H1 (cell line): ENCODE measurements at regions of chr10 and their contacts with region 1.

Region 1: DNA sequence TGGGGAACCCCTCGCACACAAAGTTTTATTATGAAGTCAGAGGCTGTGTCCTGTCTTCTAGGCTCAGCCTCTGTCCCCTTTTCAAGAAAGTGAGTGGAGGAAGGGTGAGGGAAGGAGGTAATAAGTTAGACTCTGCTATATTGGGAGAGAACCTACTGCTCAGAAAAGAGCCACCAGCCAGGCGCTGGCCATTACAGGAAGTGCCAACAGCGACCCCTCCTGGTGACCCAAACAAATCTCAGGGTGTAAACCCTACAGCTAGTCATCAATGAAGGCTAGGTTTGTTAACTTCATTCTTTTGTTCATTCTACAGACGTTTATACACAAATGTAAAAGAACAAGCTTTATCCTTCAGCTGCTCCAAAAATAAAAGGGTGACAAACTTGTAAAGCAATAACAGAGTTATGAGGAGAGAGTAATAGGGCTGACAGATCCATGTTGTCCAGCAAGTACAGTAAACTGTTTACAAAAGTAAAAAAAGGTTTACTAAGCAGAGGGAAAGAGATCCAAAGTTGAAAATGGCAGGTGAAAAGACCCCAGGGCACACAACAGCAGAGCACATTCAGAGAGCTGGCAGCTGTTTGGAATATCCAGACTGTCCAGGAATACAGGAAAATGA is 82.7 kb downstream of the FAM204A start:
- DNase-seq: peak in 1 of 2 experiments; percentile 85
- H3K4me3 ChIP-seq: no peak overlapping the region
- H3K27ac ChIP-seq: no peak overlapping the region
- H3K4me1 ChIP-seq: peaks cover 0 to 5% (median 1%) of the 10 kb centered on the region in 4 experiments; a peak in 4 of 7 replicates
- H3K27me3 ChIP-seq: peaks cover 6 to 30% (median 13%) of the 10 kb centered on the region in 4 experiments
- CTCF ChIP-seq: peak; percentile 60 to 85 (median 77)
- EP300 ChIP-seq: no peak
- POLR2A ChIP-seq: no peak
- RAD21 ChIP-seq: peak; percentile 80 to 85

Region 2: DNA sequence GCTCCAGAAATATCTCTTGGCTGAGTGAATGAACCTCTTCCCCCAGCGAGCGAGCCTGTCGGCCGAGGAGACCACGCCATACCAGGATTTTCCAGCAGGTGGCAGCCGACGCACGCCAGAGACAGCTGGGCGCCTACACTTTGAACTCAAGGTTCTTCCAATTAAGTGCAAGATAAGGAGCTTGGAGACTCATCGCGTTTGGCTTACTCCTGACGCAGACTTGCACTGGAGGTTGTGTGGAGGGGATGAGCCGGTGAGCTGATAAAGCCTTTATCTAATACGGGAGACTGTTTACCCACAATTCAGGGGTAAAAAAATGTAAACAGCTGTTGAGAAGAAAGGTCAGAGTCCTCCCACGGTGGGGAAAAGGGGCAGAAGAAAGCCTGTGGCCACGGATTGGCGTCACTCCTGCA is 762.8 kb before region 1 on chr10:
- CTCF ChIA-PET with region 1: interaction called, 14 read pairs
- POLR2A ChIA-PET with region 1: no interaction called
- DNase-seq: peak; percentile 63 to 93
- H3K4me3 ChIP-seq: no peak overlapping the region
- H3K27ac ChIP-seq: no peak overlapping the region
- H3K4me1 ChIP-seq: peaks cover 0 to 3% (median 1%) of the 10 kb centered on the region in 4 experiments; a peak in 2 of 7 replicates
- H3K27me3 ChIP-seq: peaks cover 0 to 6% (median under 1%) of the 10 kb centered on the region in 4 experiments; a peak in 2 of 7 replicates
- CTCF ChIP-seq: peak; percentile 90 to 95 (median 92)
- EP300 ChIP-seq: peak in 1 of 2 experiments; percentile 41; a peak in 1 of 3 replicates
- POLR2A ChIP-seq: no peak
- RAD21 ChIP-seq: peak; percentile 99

Region 3: GRCh38 chr10:117741524-117741923 is 517.9 kb before region 1 on chr10:
- CTCF ChIA-PET with region 1: interaction called, 11 read pairs
- POLR2A ChIA-PET with region 1: no interaction called
- DNase-seq: no peak
- H3K4me3 ChIP-seq: no peak overlapping the region
- H3K27ac ChIP-seq: no peak overlapping the region
- H3K4me1 ChIP-seq: no peaks in the 10 kb centered on the region; a peak in 1 of 7 replicates
- H3K27me3 ChIP-seq: peaks cover 0 to 7% (median 3%) of the 10 kb centered on the region in 4 experiments; a peak in 5 of 7 replicates
- CTCF ChIP-seq: peak; percentile 9 to 43 (median 39); a peak in 3 of 4 replicates
- EP300 ChIP-seq: no peak
- POLR2A ChIP-seq: no peak
- RAD21 ChIP-seq: peak; percentile 5 to 19; a peak in 1 of 4 replicates

Region 4: GRCh38 chr10:118035354-118036005 is 223.9 kb before region 1 on chr10:
- CTCF ChIA-PET with region 1: no interaction called
- POLR2A ChIA-PET with region 1: no interaction called
- DNase-seq: no peak
- H3K4me3 ChIP-seq: no peak overlapping the region
- H3K27ac ChIP-seq: no peak overlapping the region
- H3K4me1 ChIP-seq: peaks cover 0 to 3% (median 1%) of the 10 kb centered on the region in 4 experiments; a peak in 2 of 7 replicates
- H3K27me3 ChIP-seq: no peaks in the 10 kb centered on the region
- CTCF ChIP-seq: no peak
- EP300 ChIP-seq: no peak
- POLR2A ChIP-seq: no peak
- RAD21 ChIP-seq: no peak

Region 5: DNA sequence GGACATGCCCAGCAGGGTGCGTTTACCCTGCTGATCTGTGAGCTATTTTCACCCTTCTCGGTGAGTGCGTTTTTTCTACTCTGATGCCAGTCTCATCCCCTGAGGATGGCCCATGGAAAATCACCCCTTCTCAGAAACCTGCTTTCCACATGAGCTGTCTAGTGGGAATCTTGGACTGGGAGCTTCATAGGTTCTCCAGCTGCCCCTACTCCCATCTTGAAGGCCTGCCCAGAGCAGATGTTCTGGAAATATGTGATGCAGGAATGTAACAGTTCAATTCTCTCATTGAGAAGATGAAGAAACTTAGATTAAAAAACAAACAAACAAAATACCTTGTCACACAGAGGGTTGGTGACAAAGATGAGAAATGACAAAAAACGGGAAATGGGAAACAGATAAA is 65.8 kb before region 1 on chr10:
- CTCF ChIA-PET with region 1: no interaction called
- POLR2A ChIA-PET with region 1: no interaction called
- DNase-seq: no peak
- H3K4me3 ChIP-seq: no peak overlapping the region
- H3K27ac ChIP-seq: no peak overlapping the region
- H3K4me1 ChIP-seq: no peaks in the 10 kb centered on the region
- H3K27me3 ChIP-seq: no peaks in the 10 kb centered on the region
- CTCF ChIP-seq: no peak
- EP300 ChIP-seq: no peak
- POLR2A ChIP-seq: no peak
- RAD21 ChIP-seq: no peak

Region 6: GRCh38 chr10:118241229-118242137 is 17.9 kb before region 1 on chr10:
- CTCF ChIA-PET with region 1: interaction called, 38 read pairs
- POLR2A ChIA-PET with region 1: no interaction called
- DNase-seq: peak; percentile 60 to 89
- H3K4me3 ChIP-seq: no peak overlapping the region
- H3K27ac ChIP-seq: no peak overlapping the region
- H3K4me1 ChIP-seq: peaks cover 0 to 10% (median 7%) of the 10 kb centered on the region in 4 experiments; a peak in 3 of 7 replicates
- H3K27me3 ChIP-seq: peaks cover 10 to 36% (median 24%) of the 10 kb centered on the region in 4 experiments; a peak in 6 of 7 replicates
- CTCF ChIP-seq: peak; percentile 81 to 98 (median 87)
- EP300 ChIP-seq: no peak
- POLR2A ChIP-seq: no peak
- RAD21 ChIP-seq: peak; percentile 96

Region 7: DNA sequence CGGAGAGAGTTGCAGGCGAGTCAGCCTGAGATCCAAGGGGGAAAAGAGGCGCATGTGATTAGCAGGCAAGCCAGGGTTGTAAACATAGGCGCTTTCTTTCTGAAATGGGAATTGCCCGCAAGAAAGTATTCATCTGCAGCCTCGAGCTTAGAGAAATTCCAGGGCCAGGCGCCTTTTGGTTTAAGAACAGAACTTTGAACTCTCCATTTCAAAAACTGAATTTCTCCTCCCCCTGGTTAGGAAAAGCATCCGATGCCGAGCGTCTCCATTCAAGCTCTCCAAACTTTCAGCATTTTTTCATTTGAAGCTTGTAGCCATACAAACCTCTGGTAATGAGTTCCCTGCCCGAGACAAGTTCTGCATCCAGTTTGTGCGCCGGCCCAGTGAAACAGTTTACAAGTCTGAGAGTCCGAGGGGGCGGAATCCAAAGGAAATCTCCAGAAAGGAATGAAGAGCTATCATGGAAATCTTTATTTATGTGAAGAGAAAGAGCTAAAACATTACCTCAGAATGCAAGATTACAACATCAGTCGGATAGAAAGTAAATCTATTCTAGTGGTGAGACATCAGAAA is 12.8 kb after region 1 on chr10:
- CTCF ChIA-PET with region 1: interaction called, 16 read pairs
- POLR2A ChIA-PET with region 1: no interaction called
- DNase-seq: no peak
- H3K4me3 ChIP-seq: peak overlapping the region in 3 of 4 experiments; percentile 12 to 50 (median 23); a peak in 5 of 8 replicates
- H3K27ac ChIP-seq: no peak overlapping the region
- H3K4me1 ChIP-seq: peaks cover 2 to 6% (median 3%) of the 10 kb centered on the region in 4 experiments; a peak in 4 of 7 replicates
- H3K27me3 ChIP-seq: peaks cover 12 to 33% (median 25%) of the 10 kb centered on the region in 4 experiments
- CTCF ChIP-seq: no peak
- EP300 ChIP-seq: no peak
- POLR2A ChIP-seq: no peak
- RAD21 ChIP-seq: no peak

Region 8: DNA sequence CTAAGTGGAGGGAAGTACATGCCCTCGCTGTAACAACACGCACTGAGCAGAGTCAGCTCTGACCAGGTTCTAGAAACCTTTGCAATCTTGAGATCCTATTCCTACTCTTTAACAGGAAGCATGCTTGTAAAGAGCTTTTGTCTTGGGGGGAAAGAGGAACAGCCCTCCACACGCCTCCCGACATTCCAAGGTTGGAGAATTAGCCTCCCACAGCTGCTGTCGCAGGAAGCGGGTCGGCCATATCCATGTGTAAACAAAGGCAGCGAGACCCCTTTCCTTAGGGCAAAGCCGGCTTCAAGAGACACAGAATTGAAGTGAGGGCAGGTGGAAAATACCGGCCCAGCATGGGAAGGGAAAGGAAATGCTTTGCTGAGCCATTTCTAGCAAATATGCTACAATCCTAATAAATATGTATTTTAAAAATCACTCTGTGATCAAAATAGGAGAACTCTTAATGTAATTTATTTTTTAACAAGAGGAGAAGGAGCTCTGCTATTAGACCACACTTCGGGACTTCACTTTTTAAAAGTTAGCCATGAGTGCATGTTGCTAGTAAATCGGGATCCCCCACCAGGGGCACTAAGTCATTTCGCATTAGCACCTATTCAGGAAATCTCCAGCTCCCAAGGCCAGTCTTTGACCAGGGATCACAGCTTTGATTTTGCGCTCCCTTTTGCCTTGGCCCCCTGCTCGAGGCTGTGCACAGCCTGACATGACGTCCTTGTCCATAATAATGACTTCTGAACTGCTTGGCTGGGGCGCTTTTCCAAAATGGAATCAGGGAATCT is 26.8 kb after region 1 on chr10:
- CTCF ChIA-PET with region 1: interaction called, 14 read pairs
- POLR2A ChIA-PET with region 1: no interaction called
- DNase-seq: no peak
- H3K4me3 ChIP-seq: no peak overlapping the region
- H3K27ac ChIP-seq: no peak overlapping the region
- H3K4me1 ChIP-seq: peaks cover 0 to 2% (median 0%) of the 10 kb centered on the region in 4 experiments; a peak in 2 of 7 replicates
- H3K27me3 ChIP-seq: no peaks in the 10 kb centered on the region; a peak in 1 of 7 replicates
- CTCF ChIP-seq: no peak
- EP300 ChIP-seq: no peak
- POLR2A ChIP-seq: no peak
- RAD21 ChIP-seq: no peak; a peak in 1 of 4 replicates